ENCODE measurements at regions of chr1 and their contacts with region 1.

Region 1: DNA sequence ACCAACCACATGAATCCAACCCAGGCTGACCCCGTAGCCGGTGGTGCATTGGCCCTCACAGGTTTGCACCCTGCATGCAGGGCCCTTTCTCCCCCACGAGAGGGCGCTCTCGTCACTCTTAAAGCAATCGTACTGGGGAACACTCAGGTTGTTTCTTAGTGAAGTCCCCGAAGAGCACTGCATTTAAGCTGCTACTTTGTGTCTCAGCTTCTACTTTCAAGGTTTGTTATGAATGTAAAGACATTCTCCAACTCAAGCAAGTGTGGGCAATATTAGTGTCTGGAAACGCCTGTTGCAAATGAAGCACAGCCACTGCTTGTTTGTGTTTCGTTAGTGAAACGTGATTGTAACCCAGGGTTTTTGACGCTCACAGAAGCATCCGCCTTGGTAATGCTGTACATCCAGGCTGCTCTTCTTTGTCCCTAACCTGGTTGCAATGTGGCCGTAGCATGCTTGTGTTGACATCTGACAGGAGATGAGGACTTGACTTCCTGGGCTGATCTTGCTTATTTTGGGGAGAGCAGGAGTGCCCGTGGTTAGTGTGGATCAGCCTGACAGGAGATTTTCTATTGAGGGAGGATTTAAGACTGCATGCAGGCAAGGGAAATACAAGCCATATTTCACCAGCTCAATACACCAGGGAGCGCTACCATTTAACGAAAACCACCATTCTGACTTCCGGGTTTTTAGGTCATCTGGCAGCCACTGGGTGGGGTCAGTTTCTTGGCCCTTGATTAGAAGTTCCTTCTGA is 79.8 kb downstream of the ST6GALNAC3 start:
- DNase-seq: peak; percentile 88
- H3K4me3 ChIP-seq: peak overlapping the region; percentile 52
- H3K27ac ChIP-seq: peak overlapping the region; percentile 18
- H3K4me1 ChIP-seq: peaks cover 6% of the 10 kb centered on the region
- CTCF ChIP-seq: peak; percentile 89

Region 2: GRCh38 chr1:76330991-76331603 is 176.7 kb after region 1 on chr1:
- CTCF ChIA-PET with region 1: no interaction called
- POLR2A ChIA-PET with region 1: no interaction called
- intact Hi-C with region 1: loop called (anchors 1 kb)
- DNase-seq: peak; percentile 69
- H3K4me3 ChIP-seq: no peak overlapping the region
- H3K27ac ChIP-seq: no peak overlapping the region
- H3K4me1 ChIP-seq: no peaks in the 10 kb centered on the region
- CTCF ChIP-seq: peak; percentile 98

Region 3: GRCh38 chr1:76494807-76495206 is 340.4 kb after region 1 on chr1:
- CTCF ChIA-PET with region 1: no interaction called
- POLR2A ChIA-PET with region 1: no interaction called
- intact Hi-C with region 1: loop called (anchors 5 kb)
- DNase-seq: no peak
- H3K4me3 ChIP-seq: no peak overlapping the region
- H3K27ac ChIP-seq: no peak overlapping the region
- H3K4me1 ChIP-seq: no peaks in the 10 kb centered on the region
- CTCF ChIP-seq: no peak

Region 4: DNA sequence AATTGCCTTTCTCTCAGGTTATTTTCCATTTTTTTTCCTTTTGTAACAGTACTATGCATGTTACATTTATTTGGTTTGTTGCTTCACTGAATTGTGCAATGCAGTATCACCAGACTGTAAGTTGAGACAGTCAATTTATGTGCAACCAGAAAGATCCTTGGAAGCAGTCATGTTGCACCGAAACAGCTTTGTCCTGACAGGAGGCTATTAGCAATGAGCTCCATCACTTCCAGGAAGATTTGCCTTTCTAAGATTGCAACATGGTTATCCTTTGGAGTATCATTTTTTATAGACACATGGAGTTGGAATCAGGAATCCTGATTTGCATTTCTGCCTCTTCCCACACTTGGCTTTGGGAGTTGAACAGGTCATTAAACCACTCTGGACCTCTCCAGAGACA is 628.4 kb after region 1 on chr1:
- CTCF ChIA-PET with region 1: no interaction called
- POLR2A ChIA-PET with region 1: no interaction called
- intact Hi-C with region 1: no loop called
- DNase-seq: no peak
- H3K4me3 ChIP-seq: no peak overlapping the region
- H3K27ac ChIP-seq: no peak overlapping the region
- H3K4me1 ChIP-seq: no peaks in the 10 kb centered on the region
- CTCF ChIP-seq: no peak

Region 5: DNA sequence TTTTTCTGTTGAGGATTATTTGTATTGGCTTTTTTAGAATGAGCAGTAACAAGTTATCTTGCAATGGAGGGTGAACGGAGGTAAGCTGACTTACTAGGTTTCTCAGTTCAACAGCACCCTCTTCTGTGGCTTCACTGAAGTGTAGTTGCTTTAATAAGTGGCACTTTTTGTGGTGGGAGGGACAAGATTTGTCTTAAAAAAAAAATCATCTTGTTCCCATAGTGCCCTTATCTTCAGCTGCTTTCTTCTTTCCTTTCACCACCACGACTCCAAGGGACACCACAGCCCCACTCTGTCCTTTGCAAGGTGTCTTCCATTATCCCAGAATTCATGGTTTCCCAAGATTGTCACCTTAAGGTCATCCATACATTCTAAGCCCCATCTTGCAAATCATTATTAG is 971.9 kb after region 1 on chr1:
- CTCF ChIA-PET with region 1: no interaction called
- POLR2A ChIA-PET with region 1: no interaction called
- intact Hi-C with region 1: loop called (anchors 5 kb)
- DNase-seq: peak; percentile 31
- H3K4me3 ChIP-seq: no peak overlapping the region
- H3K27ac ChIP-seq: no peak overlapping the region
- H3K4me1 ChIP-seq: no peaks in the 10 kb centered on the region
- CTCF ChIP-seq: peak; percentile 65